HCT116 (cell line): ENCODE measurements at regions of chr3 and their contacts with region 1.

Region 1: GRCh38 chr3:6351752-6352151 is 509.2 kb upstream of the GRM7 start:
- DNase-seq: no peak
- ATAC-seq: no peak
- H3K4me3 ChIP-seq: no peak overlapping the region
- H3K27ac ChIP-seq: no peak overlapping the region
- H3K4me1 ChIP-seq: no peaks in the 10 kb centered on the region
- H3K27me3 ChIP-seq: no peaks in the 10 kb centered on the region
- CTCF ChIP-seq: no peak
- POLR2A ChIP-seq: no peak
- RAD21 ChIP-seq: no peak

Region 2: DNA sequence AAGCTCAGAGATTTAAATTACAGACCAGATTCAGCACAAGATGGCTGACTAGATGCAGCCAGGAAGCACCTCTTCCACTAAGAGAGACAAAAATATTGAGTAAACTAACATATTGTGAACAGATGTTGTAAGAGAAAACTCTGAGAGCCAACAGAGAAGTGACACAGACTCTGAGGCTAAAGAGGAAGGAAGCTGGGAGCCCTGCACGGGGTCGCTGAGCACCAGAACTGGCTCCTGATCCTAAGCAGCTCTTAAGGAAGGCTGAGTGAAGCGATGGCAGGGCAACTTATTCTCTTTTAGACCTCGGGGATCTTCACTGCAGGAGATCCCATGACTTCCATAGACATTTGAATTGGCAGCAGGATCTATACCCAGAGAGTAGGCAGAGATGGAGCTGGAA is 68.8 kb before region 1 on chr3:
- CTCF ChIA-PET with region 1: no interaction called
- POLR2A ChIA-PET with region 1: no interaction called
- RAD21 ChIA-PET with region 1: no interaction called
- intact Hi-C with region 1: no loop called
- DNase-seq: no peak
- ATAC-seq: no peak
- H3K4me3 ChIP-seq: no peak overlapping the region
- H3K27ac ChIP-seq: no peak overlapping the region
- H3K4me1 ChIP-seq: no peaks in the 10 kb centered on the region
- H3K27me3 ChIP-seq: no peaks in the 10 kb centered on the region
- CTCF ChIP-seq: no peak
- POLR2A ChIP-seq: no peak
- RAD21 ChIP-seq: no peak

Region 3: GRCh38 chr3:6362406-6362805 is 10.7 kb after region 1 on chr3:
- CTCF ChIA-PET with region 1: no interaction called
- POLR2A ChIA-PET with region 1: no interaction called
- RAD21 ChIA-PET with region 1: no interaction called
- intact Hi-C with region 1: loop called (anchors 1 kb)
- DNase-seq: no peak
- ATAC-seq: no peak
- H3K4me3 ChIP-seq: no peak overlapping the region
- H3K27ac ChIP-seq: no peak overlapping the region
- H3K4me1 ChIP-seq: no peaks in the 10 kb centered on the region
- H3K27me3 ChIP-seq: no peaks in the 10 kb centered on the region
- CTCF ChIP-seq: no peak
- POLR2A ChIP-seq: no peak
- RAD21 ChIP-seq: no peak